Ascending aorta (tissue), 2 donors: ENCODE measurements at regions of chr17 and their contacts with region 1.

Region 1: DNA sequence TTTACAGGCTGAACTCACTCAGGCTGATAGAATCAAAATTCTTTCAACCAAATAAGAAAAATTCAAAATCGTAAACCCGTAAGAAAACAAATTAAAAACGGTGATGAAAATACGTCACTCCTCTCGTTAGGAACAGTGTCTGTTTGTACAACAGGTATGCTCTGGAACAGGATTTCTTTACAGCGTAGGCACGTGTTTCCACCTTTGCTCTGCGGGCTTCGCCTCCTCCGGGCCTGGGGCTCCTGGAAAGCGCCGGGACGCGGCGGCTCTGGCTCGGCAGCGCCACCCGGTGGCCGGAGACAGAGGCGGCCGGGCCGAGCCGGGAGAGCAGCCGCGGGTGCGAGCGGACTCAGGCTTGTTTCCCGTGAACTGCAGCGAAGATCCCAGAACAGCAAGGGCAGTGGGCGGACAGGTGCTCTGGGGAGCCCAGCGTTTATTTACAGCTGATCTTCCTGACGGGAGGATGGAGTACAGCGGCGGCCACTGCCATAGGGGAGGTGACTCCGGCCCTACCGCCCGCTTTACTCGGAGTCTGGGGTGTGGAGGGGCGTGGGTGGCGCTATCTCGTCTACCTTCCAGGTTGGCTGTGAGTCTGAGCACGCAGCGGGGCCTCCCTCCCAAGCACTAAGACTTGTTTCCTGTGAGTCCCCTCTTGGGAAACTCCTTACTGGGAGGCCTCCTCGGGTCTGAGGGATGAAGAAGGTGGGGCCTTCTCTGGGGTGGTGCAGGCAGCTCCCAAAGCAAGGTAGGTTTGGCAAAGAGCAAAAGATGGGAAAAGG is 40.5 kb upstream of the ATP2A3 start:
- DNase-seq: peak in 1 of 2 donors; percentile 65
- H3K4me3 ChIP-seq: no peak overlapping the region
- H3K27ac ChIP-seq: no peak overlapping the region
- H3K4me1 ChIP-seq: peaks cover 4 to 11% of the 10 kb centered on the region in 2 donors
- H3K27me3 ChIP-seq: no peaks in the 10 kb centered on the region
- CTCF ChIP-seq: peak; percentile 94 to 96 (median 94)

Region 2: DNA sequence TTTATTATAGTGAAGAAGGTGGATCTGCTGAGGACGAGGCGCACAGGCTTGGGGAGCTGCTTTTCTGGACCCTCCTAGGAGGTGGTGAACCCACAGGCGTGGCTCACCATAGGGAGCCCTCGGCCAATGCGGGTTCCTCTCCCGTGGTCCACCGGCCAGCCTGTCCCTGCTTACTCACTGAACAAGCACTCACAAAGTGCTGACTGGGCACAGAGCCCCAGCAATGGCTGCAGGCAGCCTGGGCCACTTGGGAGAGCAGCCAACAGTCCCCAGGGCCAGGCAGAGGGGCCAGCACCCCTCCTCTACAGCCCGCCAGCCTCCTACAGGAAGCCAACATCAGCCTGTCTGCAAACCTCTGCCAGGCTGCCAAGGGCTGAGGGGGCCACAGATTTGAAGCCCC is 139.5 kb before region 1 on chr17:
- intact Hi-C with region 1: loop called (anchors 2 kb)
- DNase-seq: peak; percentile 47 to 77
- H3K4me3 ChIP-seq: no peak overlapping the region
- H3K27ac ChIP-seq: peak overlapping the region; percentile 77 to 81
- H3K4me1 ChIP-seq: peaks cover 9 to 11% of the 10 kb centered on the region in 2 donors
- H3K27me3 ChIP-seq: no peaks in the 10 kb centered on the region
- CTCF ChIP-seq: no peak

Region 3: GRCh38 chr17:3963237-3964201 is 41.2 kb before region 1 on chr17:
- intact Hi-C with region 1: loop called (anchors 2 kb)
- DNase-seq: no peak
- H3K4me3 ChIP-seq: peak overlapping the region; percentile 65 to 71
- H3K27ac ChIP-seq: peak overlapping the region; percentile 12 to 85
- H3K4me1 ChIP-seq: peaks cover 10 to 25% of the 10 kb centered on the region in 2 donors
- H3K27me3 ChIP-seq: no peaks in the 10 kb centered on the region
- CTCF ChIP-seq: no peak

Region 4: GRCh38 chr17:4074831-4075495 is 70.3 kb after region 1 on chr17:
- intact Hi-C with region 1: no loop called
- DNase-seq: no peak
- H3K4me3 ChIP-seq: no peak overlapping the region
- H3K27ac ChIP-seq: peak overlapping the region; percentile 45 to 62
- H3K4me1 ChIP-seq: peaks cover 0 to 11% of the 10 kb centered on the region in 2 donors
- H3K27me3 ChIP-seq: no peaks in the 10 kb centered on the region
- CTCF ChIP-seq: peak; percentile 43 to 75 (median 66)